ENCODE measurements at regions of chr6 and their contacts with region 1.

Region 1: DNA sequence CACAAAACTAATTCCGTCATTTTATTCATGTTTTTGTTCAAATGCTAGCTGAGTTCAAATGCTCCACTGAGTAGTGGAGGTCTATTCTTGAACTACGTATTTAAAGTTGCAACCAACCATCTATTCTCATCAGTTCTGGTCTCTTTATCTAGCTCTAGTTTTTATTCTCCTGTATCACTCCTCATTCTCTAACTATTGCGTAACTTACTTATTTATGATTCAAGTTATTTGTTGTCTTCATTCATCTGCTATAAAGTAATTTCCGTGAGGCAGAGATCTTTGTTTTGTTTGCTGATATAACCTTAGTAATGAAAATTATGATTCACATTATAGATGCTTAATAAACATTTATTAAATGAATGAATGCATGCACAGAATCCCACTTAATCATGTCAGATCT is 221.6 kb upstream of the ASCC3 start:
- DNase-seq: no peak
- H3K4me3 ChIP-seq: no peak overlapping the region
- H3K4me3 Mint-ChIP-seq: no peak overlapping the region
- H3K27ac Mint-ChIP-seq: no peak overlapping the region
- H3K4me1 ChIP-seq: no peaks in the 10 kb centered on the region
- H3K4me1 Mint-ChIP-seq: no peaks in the 10 kb centered on the region
- H3K27me3 ChIP-seq: no peaks in the 10 kb centered on the region
- H3K27me3 Mint-ChIP-seq: peaks cover 3% of the 10 kb centered on the region
- CTCF ChIP-seq: no peak

Region 2: GRCh38 chr6:100796049-100796823 is 306.5 kb before region 1 on chr6:
- CTCF ChIA-PET with region 1: no interaction called
- POLR2A ChIA-PET with region 1: no interaction called
- intact Hi-C with region 1: loop called (anchors 5 kb)
- DNase-seq: peak in 1 of 2 experiments; percentile 8
- H3K4me3 ChIP-seq: no peak overlapping the region
- H3K4me3 Mint-ChIP-seq: no peak overlapping the region
- H3K27ac Mint-ChIP-seq: no peak overlapping the region
- H3K4me1 ChIP-seq: peaks cover 5% of the 10 kb centered on the region; the same call in 1 of the 2 replicates
- H3K4me1 Mint-ChIP-seq: peaks cover 7% of the 10 kb centered on the region
- H3K27me3 ChIP-seq: no peaks in the 10 kb centered on the region
- H3K27me3 Mint-ChIP-seq: no peaks in the 10 kb centered on the region
- CTCF ChIP-seq: peak in 1 of 2 experiments; percentile 5